Posterior vena cava (tissue), 2 donors: ENCODE measurements at regions of chr12 and their contacts with region 1.

Region 1: GRCh38 chr12:54958048-54958658 is 26.4 kb downstream of the TESPA1 start:
- DNase-seq: no peak

Region 2: GRCh38 chr12:54596526-54596946 is 361.6 kb before region 1 on chr12:
- intact Hi-C with region 1: loop called in 1 of 2 experiments (anchors 10 kb)
- DNase-seq: no peak